ENCODE measurements at regions of chr16 and their contacts with region 1.

Region 1: DNA sequence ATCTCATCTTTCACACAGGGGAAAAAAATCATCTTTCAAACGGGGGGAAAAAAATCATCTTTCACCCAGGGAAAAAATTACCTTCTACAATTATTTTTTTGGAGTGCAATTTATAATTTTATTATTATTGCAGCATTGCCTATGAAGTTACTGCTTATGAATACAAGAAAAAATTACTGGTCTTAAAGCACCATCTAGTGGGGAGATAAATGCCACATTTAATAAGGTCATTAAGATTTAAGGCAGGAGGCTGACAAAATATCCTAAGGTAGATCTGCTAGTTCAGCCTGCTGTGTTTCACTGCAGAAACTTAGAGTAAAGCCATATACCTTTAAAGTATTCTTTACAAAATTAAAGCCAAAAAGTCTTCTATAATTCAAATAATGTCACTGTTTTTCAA is 13.7 kb downstream of the SHCBP1 start:
- DNase-seq: peak; percentile 55
- ATAC-seq: no peak
- H3K4me3 ChIP-seq: no peak overlapping the region
- H3K27ac ChIP-seq: no peak overlapping the region
- H3K4me1 ChIP-seq: no peaks in the 10 kb centered on the region
- H3K27me3 ChIP-seq: no peaks in the 10 kb centered on the region
- CTCF ChIP-seq: peak; percentile 42
- EP300 ChIP-seq: no peak
- POLR2A ChIP-seq: no peak
- RAD21 ChIP-seq: no peak

Region 2: GRCh38 chr16:46555951-46556350 is 51.6 kb before region 1 on chr16:
- CTCF ChIA-PET with region 1: interaction called, 24 read pairs
- POLR2A ChIA-PET with region 1: no interaction called
- in situ Hi-C with region 1: loop called (anchors 5 kb)
- intact Hi-C with region 1: loop called (anchors 1 kb)
- DNase-seq: no peak
- ATAC-seq: no peak
- H3K4me3 ChIP-seq: no peak overlapping the region
- H3K27ac ChIP-seq: no peak overlapping the region
- H3K4me1 ChIP-seq: peaks cover 12% of the 10 kb centered on the region; the same call in 1 of the 2 replicates
- H3K27me3 ChIP-seq: peaks cover 0 to 3% of the 10 kb centered on the region in 2 experiments; a peak in 2 of 5 replicates
- CTCF ChIP-seq: no peak
- EP300 ChIP-seq: no peak
- POLR2A ChIP-seq: no peak
- RAD21 ChIP-seq: no peak

Region 3: DNA sequence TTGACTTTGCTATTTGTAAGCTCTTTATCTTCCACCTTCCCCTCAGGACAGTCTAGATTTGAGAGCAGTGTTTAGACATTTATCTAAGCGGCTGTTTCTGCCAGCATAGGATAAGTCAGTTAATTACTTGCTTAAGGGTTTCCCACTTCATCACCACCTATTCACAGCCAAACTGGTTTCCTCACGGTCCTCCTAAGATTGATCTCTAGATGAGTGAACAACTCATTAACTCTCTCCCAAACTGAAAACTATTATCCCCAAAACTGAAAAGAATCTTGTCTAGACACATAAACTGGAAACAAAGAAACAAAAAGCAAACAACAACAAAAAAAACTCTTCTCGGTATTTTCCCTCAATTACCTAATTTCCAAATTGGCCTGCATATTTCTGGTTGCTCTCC is 44.5 kb before region 1 on chr16:
- CTCF ChIA-PET with region 1: no interaction called
- POLR2A ChIA-PET with region 1: no interaction called
- in situ Hi-C with region 1: loop called (anchors 5 kb)
- intact Hi-C with region 1: no loop called
- DNase-seq: no peak
- ATAC-seq: no peak
- H3K4me3 ChIP-seq: no peak overlapping the region
- H3K27ac ChIP-seq: no peak overlapping the region
- H3K4me1 ChIP-seq: no peaks in the 10 kb centered on the region
- H3K27me3 ChIP-seq: peaks cover 0 to 5% of the 10 kb centered on the region in 2 experiments; a peak in 3 of 5 replicates
- CTCF ChIP-seq: no peak
- EP300 ChIP-seq: no peak
- POLR2A ChIP-seq: no peak
- RAD21 ChIP-seq: no peak

Region 4: GRCh38 chr16:46649928-46650623 is 42.5 kb after region 1 on chr16:
- CTCF ChIA-PET with region 1: no interaction called
- POLR2A ChIA-PET with region 1: no interaction called
- in situ Hi-C with region 1: no loop called
- intact Hi-C with region 1: no loop called
- DNase-seq: no peak
- ATAC-seq: peak; percentile 16; the same call in 2 of the 3 replicates
- H3K4me3 ChIP-seq: no peak overlapping the region
- H3K27ac ChIP-seq: no peak overlapping the region
- H3K4me1 ChIP-seq: peaks cover 25% of the 10 kb centered on the region
- H3K27me3 ChIP-seq: 0 out of 5 replicates have a peak, but pooled peaks cover 0 to 1% of the 10 kb centered on the region in 2 experiments
- CTCF ChIP-seq: no peak
- EP300 ChIP-seq: no peak
- POLR2A ChIP-seq: no peak
- RAD21 ChIP-seq: no peak